ENCODE measurements at regions of chr3 and their contacts with region 1.

Region 1: DNA sequence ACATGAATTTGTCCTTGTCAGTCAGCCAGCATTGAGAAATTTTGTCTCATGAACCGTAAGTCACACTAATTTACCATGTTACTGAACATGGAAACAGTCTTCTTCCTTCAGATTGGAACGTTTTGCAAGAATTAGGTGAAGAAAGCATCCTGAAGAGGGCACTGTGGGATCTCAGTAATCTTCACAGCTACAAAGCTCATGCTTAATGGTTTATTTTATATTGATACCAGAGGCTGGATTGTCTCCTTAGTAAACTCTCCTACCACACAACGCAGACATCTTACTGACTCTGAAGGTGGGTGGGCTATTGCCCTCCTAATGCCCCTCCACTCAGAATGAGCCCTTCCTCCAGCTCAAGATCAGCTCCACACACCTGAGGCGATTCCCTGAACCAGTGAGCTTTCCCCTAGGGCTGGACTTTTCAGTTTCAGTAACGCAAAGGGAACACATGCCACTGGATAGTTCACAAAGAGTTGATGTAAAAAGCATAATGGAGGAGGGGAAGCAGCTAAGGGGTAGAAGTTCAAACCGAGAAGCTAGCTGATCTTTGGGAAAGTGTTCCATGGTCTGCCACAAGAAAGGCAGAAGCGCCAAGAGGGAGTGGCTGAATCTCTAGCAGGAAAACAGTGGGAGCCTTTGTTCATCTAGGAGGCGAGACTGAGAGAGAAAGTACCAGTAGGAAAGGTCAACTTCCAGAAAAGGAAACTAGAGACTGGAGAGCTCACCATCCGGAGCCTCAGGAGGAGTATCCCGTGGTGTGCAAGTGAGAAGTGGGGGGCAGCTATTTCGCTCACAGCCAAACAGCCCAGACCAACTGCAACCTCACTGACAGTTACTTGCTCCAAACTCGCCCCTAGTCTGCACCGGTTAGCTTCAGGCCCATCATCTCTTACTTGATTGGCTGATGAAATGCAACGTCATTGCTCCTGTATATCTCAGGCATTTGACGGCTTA is at the start of gene SLC9C1:
- DNase-seq: peak in 2 of 5 donors; percentile 17 to 41
- H3K4me3 ChIP-seq: no peak within 1 kb of the TSS
- H3K4me3 Mint-ChIP-seq: peak within 1 kb of the TSS in 4 of 7 donors; percentile 41 to 72 (median 65)
- H3K27ac ChIP-seq: no peak within 1 kb of the TSS
- H3K27ac Mint-ChIP-seq: peak within 1 kb of the TSS in 1 of 8 donors; percentile 31
- H3K4me1 ChIP-seq: peaks cover 8% of the 10 kb centered on the region
- H3K4me1 Mint-ChIP-seq: peaks cover 20 to 29% (median 28%) of the 10 kb centered on the region in 3 donors
- H3K27me3 ChIP-seq: no peaks in the 10 kb centered on the region
- H3K27me3 Mint-ChIP-seq: peaks cover 0 to 2% of the 10 kb centered on the region in 2 donors
- total RNA-seq, gene SLC9C1: not detected

Region 2: DNA sequence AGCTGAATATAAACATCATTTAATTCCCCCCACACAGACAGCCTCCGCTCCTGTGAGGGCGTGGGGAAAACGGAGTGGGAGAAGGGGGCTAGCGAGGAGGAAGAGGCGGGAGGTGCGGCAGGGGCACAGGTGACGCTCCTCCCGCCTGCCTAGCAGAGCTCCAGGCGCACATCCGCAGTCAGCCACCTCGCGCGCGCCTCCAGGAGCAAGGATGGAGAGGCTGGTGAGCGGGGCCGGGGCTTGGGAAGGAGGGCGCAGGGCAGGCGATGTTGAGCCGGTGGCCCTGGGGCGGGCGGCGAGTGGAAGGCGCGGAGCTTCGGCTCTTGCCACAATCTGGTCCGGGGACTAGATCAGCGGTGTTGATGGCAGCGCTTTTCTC is 39.3 kb after region 1 on chr3 and contains the start of gene CD200:
- CTCF ChIA-PET with region 1: interaction called, 10 read pairs
- POLR2A ChIA-PET with region 1: no interaction called
- DNase-seq: peak; percentile 8 to 51 (median 26)
- H3K4me3 ChIP-seq: peak within 1 kb of the TSS; percentile 69
- H3K4me3 Mint-ChIP-seq: peak within 1 kb of the TSS; percentile 84 to 93 (median 89)
- H3K27ac ChIP-seq: no peak within 1 kb of the TSS
- H3K27ac Mint-ChIP-seq: peak within 1 kb of the TSS in 6 of 8 donors; percentile 5 to 49 (median 34)
- H3K4me1 ChIP-seq: peaks cover 5% of the 10 kb centered on the region
- H3K4me1 Mint-ChIP-seq: peaks cover 21 to 46% (median 23%) of the 10 kb centered on the region in 3 donors
- H3K27me3 ChIP-seq: no peaks in the 10 kb centered on the region
- H3K27me3 Mint-ChIP-seq: peaks cover 5 to 12% of the 10 kb centered on the region in 2 donors
- total RNA-seq, gene CD200: 17.9 to 18.3 TPM

Region 3: DNA sequence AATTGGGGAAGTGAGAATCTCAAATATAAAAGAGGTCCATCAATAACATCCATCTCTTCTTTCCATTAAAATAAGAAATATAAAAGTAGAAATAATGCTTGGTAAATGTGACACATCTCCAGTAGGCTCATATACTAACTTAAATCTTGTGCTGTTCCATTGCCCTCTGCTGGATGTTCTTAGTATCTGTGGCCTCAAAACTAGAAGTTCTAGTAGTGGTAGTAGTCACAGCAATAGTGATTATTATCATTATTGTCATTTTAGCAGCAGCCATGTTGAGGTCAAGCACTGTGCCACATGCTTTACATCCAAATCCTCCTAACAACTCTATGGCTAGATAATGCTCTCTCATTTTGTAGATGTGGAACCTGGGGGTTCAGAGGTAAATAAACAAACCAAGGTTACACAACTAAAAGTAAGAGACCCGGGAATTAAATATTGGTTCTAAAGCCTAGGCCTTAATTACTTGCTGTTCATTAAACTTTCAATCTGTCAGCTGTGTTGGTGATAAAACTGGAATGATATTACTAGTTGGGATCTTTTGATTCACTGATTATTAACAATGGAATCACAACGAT is 225.9 kb after region 1 on chr3:
- CTCF ChIA-PET with region 1: interaction called, 13 read pairs
- POLR2A ChIA-PET with region 1: no interaction called
- DNase-seq: peak in 2 of 5 donors; percentile 50 to 55
- H3K4me3 ChIP-seq: no peak overlapping the region
- H3K4me3 Mint-ChIP-seq: no peak overlapping the region
- H3K27ac ChIP-seq: no peak overlapping the region
- H3K27ac Mint-ChIP-seq: no peak overlapping the region
- H3K4me1 ChIP-seq: peaks cover 3% of the 10 kb centered on the region
- H3K4me1 Mint-ChIP-seq: peaks cover 15 to 25% (median 22%) of the 10 kb centered on the region in 3 donors
- H3K27me3 ChIP-seq: no peaks in the 10 kb centered on the region
- H3K27me3 Mint-ChIP-seq: peaks cover 0 to 2% of the 10 kb centered on the region in 2 donors